ENCODE measurements at regions of chr9 and their contacts with region 1.

Region 1: DNA sequence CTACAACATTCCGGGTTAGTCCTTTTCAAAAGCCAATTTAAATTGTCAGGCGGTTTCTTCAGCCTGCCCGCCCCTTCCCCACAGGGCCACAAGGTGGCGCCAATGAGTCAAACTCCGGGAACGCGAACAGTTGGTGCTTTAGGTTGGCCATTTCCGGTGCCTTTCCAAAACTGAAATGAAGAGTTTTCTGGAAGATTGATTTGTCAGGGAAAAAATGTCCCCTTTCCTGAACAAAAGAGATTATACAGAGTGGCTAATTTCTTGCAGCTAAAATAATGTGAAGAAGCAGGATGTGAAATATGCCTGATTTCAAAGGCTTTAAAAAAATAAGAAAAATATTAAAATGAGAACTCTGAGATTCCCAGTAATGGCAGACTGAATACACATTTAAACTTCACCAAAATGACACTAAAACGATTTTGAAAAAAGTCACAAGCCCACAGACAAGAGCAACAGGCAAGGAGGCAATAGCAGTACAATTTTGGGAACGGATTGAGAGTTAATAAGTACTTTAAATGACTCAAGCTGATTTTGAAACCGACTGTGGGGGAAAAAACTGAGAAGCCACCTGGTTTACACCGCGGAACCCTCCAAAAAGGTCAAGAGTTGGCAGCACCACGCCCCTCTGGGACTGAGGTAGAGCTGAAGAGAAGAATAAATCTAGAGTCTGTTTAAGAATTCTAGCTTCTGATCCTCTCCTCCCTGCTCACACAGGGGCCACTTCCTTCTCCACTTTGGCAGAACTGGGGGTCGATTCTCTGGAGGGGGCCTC is 45.7 kb downstream of the SLC46A2 start:
- DNase-seq: peak; percentile 24
- ATAC-seq: peak; percentile 93
- H3K4me3 ChIP-seq: no peak overlapping the region
- H3K27ac ChIP-seq: no peak overlapping the region
- H3K4me1 ChIP-seq: peaks cover 11% of the 10 kb centered on the region
- H3K27me3 ChIP-seq: no peaks in the 10 kb centered on the region; a peak in 1 of 4 replicates
- CTCF ChIP-seq: peak; percentile 91 to 98 (median 95)
- EP300 ChIP-seq: no peak
- POLR2A ChIP-seq: no peak
- RAD21 ChIP-seq: peak; percentile 91

Region 2: DNA sequence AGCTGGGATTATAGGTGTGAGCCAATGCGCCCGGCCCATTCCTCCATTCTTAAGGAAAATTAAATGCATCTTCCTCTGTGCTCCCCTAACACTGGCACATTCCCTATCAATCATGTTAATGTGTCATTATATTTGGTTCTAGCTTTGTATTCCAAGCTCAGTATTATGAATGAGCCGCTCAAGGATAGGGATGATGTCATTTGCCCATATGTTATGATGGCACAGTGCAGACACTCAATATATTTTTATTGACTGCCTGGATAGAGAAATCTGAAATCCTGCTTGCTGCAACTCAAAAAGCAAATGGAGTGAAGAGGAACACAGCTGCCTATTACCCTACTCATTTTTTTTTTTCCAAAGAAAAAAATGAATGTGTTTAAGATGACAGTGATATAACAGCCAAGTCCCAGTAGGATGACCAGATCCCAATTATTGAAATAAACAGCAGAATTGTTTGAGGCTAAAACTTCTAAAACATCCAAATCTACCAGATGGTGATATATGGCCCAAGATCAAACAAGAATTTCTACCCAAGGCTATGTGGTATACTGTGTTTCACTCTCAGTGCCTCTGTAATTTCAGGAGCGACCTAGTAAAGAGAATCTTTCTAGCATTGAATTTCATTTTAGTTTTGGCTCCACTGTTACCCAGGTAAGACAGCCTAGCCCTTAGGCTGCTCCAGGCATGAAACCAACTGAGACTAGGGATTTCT is 686.1 kb before region 1 on chr9:
- CTCF ChIA-PET with region 1: no interaction called
- POLR2A ChIA-PET with region 1: no interaction called
- RAD21 ChIA-PET with region 1: no interaction called
- SMC1A ChIA-PET with region 1: no interaction called
- in situ Hi-C with region 1: no loop called
- intact Hi-C with region 1: no loop called
- DNase-seq: no peak
- ATAC-seq: no peak
- H3K4me3 ChIP-seq: no peak overlapping the region
- H3K27ac ChIP-seq: no peak overlapping the region
- H3K4me1 ChIP-seq: peaks cover 4% of the 10 kb centered on the region
- H3K27me3 ChIP-seq: no peaks in the 10 kb centered on the region
- CTCF ChIP-seq: no peak
- EP300 ChIP-seq: no peak
- POLR2A ChIP-seq: no peak
- RAD21 ChIP-seq: no peak

Region 3: GRCh38 chr9:112795921-112796320 is 49.0 kb before region 1 on chr9:
- CTCF ChIA-PET with region 1: no interaction called
- POLR2A ChIA-PET with region 1: no interaction called
- RAD21 ChIA-PET with region 1: no interaction called
- SMC1A ChIA-PET with region 1: no interaction called
- in situ Hi-C with region 1: no loop called
- intact Hi-C with region 1: no loop called
- DNase-seq: no peak
- ATAC-seq: no peak
- H3K4me3 ChIP-seq: no peak overlapping the region
- H3K27ac ChIP-seq: no peak overlapping the region
- H3K4me1 ChIP-seq: peaks cover 3% of the 10 kb centered on the region; the same call in 1 of the 2 replicates
- H3K27me3 ChIP-seq: no peaks in the 10 kb centered on the region
- CTCF ChIP-seq: no peak
- EP300 ChIP-seq: no peak
- POLR2A ChIP-seq: no peak
- RAD21 ChIP-seq: no peak

Region 4: GRCh38 chr9:112858625-112859147 is 13.7 kb after region 1 on chr9:
- CTCF ChIA-PET with region 1: interaction called, 16 read pairs
- POLR2A ChIA-PET with region 1: no interaction called
- RAD21 ChIA-PET with region 1: no interaction called
- SMC1A ChIA-PET with region 1: interaction called, 6 read pairs
- in situ Hi-C with region 1: no loop called
- intact Hi-C with region 1: no loop called
- DNase-seq: peak; percentile 31
- ATAC-seq: peak; percentile 90
- H3K4me3 ChIP-seq: no peak overlapping the region
- H3K27ac ChIP-seq: peak overlapping the region; percentile 34; the same call in 1 of the 2 replicates
- H3K4me1 ChIP-seq: peaks cover 36% of the 10 kb centered on the region
- H3K27me3 ChIP-seq: no peaks in the 10 kb centered on the region; a peak in 1 of 4 replicates
- CTCF ChIP-seq: no peak
- EP300 ChIP-seq: peak in 1 of 2 experiments; percentile 12; a peak in 1 of 4 replicates
- POLR2A ChIP-seq: no peak
- RAD21 ChIP-seq: no peak

Region 5: GRCh38 chr9:112905084-112905483 is 60.1 kb after region 1 on chr9:
- CTCF ChIA-PET with region 1: interaction called, 138 read pairs
- POLR2A ChIA-PET with region 1: no interaction called
- RAD21 ChIA-PET with region 1: interaction called, 27 read pairs
- SMC1A ChIA-PET with region 1: interaction called, 53 read pairs
- in situ Hi-C with region 1: loop called (anchors 5 kb)
- intact Hi-C with region 1: loop called (anchors 1 kb)
- DNase-seq: no peak
- ATAC-seq: no peak
- H3K4me3 ChIP-seq: no peak overlapping the region
- H3K27ac ChIP-seq: no peak overlapping the region
- H3K4me1 ChIP-seq: no peaks in the 10 kb centered on the region
- H3K27me3 ChIP-seq: no peaks in the 10 kb centered on the region
- CTCF ChIP-seq: no peak
- EP300 ChIP-seq: no peak
- POLR2A ChIP-seq: no peak
- RAD21 ChIP-seq: no peak